ENCODE measurements at regions of chr17 and their contacts with region 1.

Region 1: GRCh38 chr17:2179615-2180295 is 123.8 kb downstream of the SMG6 start:
- DNase-seq: peak; percentile 67
- H3K4me3 ChIP-seq: no peak overlapping the region
- H3K27ac ChIP-seq: peak overlapping the region; percentile 76 to 87 (median 82)
- H3K4me1 ChIP-seq: peaks cover 39 to 84% (median 66%) of the 10 kb centered on the region in 4 donors
- H3K27me3 ChIP-seq: no peaks in the 10 kb centered on the region
- CTCF ChIP-seq: no peak
- EP300 ChIP-seq: peak; percentile 17
- POLR2A ChIP-seq: no peak

Region 2: DNA sequence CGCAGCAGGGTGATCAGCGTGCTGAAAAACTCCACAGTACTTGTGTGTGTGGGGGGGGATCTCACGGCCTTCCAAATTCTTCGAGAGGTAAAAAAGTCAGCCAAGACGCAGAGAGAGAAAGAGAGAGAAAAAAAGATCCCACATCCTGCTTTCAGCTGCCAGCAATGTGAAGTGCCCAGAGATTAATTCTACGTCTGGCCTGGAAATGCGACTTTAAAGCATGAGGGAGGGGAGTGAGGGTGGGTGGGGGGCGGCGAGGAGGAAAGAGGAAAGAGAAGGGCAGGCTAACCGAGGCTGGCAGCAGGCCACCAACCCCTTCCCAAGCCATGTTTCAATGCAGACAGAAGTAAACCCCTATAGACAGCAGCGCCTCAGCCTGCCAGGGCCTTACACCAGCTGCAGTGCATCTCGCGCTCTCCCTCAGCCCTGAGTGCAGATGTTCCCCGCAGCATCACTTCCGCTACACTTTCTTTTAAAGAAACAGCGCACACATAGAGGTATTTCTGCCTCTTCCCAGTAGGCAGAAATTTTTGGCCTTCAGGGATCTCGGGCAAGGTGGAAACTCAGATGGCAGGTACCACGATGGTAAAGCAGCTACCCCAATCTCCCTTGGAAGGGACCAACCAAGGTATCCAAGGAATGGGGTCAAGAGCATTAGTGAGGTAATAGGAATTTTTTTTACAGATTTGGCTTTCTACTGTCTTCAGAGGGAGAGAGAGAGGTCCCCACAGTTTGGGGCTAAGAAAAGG is 36.0 kb after region 1 on chr17:
- in situ Hi-C with region 1: loop called in 1 of 4 experiments (anchors 5 kb)
- intact Hi-C with region 1: no loop called
- DNase-seq: peak; percentile 72
- H3K4me3 ChIP-seq: peak overlapping the region in 1 of 4 donors; percentile 35
- H3K27ac ChIP-seq: peak overlapping the region; percentile 88 to 91 (median 90)
- H3K4me1 ChIP-seq: peaks cover 17 to 48% (median 30%) of the 10 kb centered on the region in 4 donors
- H3K27me3 ChIP-seq: no peaks in the 10 kb centered on the region
- CTCF ChIP-seq: no peak
- EP300 ChIP-seq: no peak
- POLR2A ChIP-seq: peak; percentile 49

Region 3: GRCh38 chr17:2336215-2336851 is 156.6 kb after region 1 on chr17 and contains the start of gene TSR1:
- in situ Hi-C with region 1: no loop called
- intact Hi-C with region 1: no loop called
- DNase-seq: peak; percentile 93
- H3K4me3 ChIP-seq: peak within 1 kb of the TSS; percentile 67 to 98 (median 81)
- H3K27ac ChIP-seq: peak within 1 kb of the TSS; percentile 92 to 95 (median 94)
- H3K4me1 ChIP-seq: peaks cover 6 to 24% (median 17%) of the 10 kb centered on the region in 4 donors
- H3K27me3 ChIP-seq: no peaks in the 10 kb centered on the region
- CTCF ChIP-seq: peak in 1 of 5 experiments; percentile 26
- EP300 ChIP-seq: no peak
- POLR2A ChIP-seq: peak; percentile 87
- total RNA-seq, gene TSR1: 3.0 to 18.9 (median 14.4) TPM

Measured in transverse colon (tissue), 4 donors.